Endothelial cell of umbilical vein (primary cell): ENCODE measurements at regions of chr12 and their contacts with region 1.

Region 1: DNA sequence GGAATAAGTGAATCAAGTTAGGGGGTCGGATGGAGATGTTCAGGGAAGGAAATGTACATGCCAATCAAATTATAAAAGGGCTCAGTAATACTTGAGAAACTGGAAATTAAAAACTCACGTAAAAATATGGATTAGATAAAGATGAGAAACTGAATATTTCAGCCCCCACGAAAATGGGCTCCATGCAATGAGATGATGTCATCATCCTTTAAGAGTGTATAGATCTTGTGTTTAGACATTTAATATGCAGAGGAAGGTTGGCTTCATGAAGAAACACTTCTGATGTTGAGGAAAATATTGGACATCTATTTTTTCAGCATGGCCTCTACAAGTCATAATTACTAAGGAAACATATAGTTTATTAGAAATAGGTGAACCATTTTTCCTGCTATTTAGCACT is 9.5 kb downstream of the TBC1D30 start:
- DNase-seq: no peak
- H3K4me3 ChIP-seq: no peak overlapping the region
- H3K27ac ChIP-seq: no peak overlapping the region
- H3K4me1 ChIP-seq: no peaks in the 10 kb centered on the region
- H3K27me3 ChIP-seq: no peaks in the 10 kb centered on the region
- CTCF ChIP-seq: no peak
- POLR2A ChIP-seq: no peak

Region 2: DNA sequence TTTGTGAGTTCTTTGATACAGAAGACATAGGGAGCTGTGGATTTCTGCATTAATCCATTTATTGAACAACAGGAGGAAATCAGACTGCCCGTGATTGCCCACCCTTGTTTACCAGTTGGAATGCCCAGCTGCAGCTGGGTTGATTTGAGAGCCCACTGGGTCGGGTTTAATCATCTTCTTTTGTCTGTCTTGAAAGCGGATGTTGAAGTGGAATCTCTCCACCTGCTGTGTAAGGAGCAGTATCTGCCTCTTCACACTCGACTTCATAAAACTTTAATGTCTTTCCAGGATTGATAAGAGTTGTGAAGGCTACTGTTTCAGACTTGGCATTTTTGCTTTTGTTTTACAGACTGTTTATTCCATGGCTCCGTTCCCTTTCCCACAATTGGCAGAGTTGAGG is 30.4 kb after region 1 on chr12:
- CTCF ChIA-PET with region 1: no interaction called
- POLR2A ChIA-PET with region 1: no interaction called
- dilution Hi-C with region 1: no loop called
- intact Hi-C with region 1: loop called (anchors 1 kb)
- DNase-seq: no peak
- H3K4me3 ChIP-seq: no peak overlapping the region
- H3K27ac ChIP-seq: no peak overlapping the region
- H3K4me1 ChIP-seq: no peaks in the 10 kb centered on the region
- H3K27me3 ChIP-seq: no peaks in the 10 kb centered on the region
- CTCF ChIP-seq: no peak
- POLR2A ChIP-seq: no peak